Posterior cingulate gyrus (tissue), 11 donors: ENCODE measurements at regions of chr1 and their contacts with region 1.

Region 1: GRCh38 chr1:107782217-107782845 is 182.6 kb downstream of the VAV3 start:
- DNase-seq: no peak

Region 2: DNA sequence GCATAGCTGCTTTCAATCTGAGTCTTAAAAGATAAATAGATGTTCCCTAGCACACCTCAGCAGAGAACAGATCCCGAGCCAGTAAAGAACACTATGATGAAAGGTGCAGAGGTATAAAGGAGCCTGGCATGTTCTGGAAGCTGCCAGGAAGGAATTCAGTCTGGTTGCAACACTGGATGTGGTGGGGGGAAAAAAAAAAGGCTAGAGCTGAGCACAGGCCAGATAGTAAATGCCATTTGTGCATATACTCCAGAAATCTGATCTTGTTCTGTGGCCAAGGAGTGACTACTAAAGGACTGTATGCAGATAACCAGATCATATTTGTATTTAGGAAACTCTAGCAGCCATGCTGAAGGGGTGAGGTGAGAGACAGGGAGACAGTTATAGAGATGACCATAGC is 57.7 kb before region 1 on chr1:
- intact Hi-C with region 1: no loop called
- DNase-seq: no peak

Region 3: DNA sequence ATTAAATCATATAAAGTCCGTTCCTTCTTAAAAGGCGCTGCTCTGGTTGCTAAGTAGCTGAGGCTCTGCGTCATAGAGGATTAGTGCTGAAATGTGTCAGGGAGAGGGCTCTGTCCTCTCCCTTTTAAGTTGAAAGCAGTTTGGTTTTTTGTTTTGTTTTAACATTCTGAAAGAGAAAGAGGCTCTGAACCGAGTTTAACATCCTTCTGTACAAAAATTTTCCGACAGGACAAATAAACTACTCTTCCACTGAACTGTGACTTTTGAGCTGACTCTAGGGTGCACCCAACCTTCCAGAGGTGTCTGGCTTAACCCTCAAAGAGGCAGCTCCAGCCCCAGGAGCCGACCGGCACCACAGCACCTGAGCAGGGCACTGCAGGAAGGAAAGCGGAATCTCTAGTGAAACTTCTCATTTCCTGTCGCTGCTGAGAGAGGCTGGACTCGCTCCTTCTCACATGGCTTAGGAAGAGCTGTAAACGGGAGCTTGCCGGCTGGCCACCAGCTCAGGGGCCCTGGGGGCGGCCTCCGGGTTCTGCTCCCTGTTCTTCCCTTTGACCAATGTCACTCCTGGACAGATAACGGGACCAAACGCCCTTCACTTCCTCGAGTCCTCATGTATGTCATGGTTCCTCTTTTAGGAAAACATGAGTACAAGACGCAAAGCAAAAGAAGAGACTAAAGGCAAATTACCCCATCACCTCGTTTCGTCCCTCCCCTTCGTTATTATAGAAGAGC is 181.4 kb after region 1 on chr1:
- intact Hi-C with region 1: loop called (anchors 10 kb)
- DNase-seq: peak in 4 of 10 donors; percentile 2 to 80 (median 46)

Region 4: DNA sequence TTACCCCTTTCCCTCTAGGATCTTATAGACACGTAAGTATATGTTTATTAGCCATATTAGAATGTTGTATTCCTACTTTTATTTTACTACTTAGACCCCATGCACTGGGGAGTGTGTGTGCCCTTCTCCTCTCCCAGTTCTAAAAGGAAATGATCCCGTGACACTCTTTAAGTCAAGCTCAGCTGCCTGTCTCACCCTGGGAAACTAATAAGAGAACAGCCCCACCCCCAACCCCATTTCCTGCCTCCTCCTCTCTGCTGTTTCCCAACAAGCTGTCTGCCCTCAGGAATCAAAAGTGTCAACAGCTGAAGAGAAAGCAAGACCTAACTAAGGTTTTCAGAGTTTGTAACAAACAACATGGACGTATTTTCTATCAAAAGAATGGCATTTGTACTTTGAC is 275.2 kb after region 1 on chr1:
- intact Hi-C with region 1: loop called (anchors 10 kb)
- DNase-seq: no peak

Region 5: DNA sequence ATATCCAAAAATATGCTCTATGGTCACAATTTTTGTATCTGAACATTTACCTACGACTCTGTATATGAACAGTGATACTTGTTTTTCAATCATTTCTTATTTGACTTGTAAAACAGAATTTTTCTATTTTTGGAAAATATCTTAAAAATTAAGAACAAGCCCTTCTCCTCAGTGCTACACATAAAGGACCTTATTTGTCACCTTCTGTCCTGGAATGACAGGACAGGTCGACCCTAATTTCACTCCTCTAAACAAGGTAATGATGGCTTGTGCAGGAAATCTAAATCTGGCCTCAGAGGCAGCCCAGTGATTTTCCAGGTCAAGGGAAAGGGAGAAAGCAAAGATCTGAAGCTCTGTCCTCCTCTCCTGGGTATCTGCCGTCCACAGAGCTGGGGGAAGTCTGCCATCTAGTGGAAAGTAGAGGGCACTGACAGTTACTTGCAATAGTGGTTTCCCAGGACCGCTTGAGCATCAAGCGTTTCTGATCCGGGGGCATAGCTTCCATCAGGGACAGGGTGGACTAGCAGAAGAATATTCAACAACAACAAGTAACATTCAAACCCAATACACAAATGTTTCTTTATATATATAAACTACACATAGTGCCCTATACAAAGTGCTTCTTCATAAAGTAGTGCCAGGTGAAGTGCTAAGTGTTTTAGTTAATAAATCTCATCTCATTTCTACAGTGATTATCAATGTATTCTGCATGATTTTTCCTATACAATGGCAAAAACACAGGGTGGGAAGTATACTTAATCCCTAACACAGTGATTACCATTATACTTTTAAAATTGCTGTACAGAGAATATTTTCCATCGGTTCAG is 343.2 kb after region 1 on chr1:
- intact Hi-C with region 1: loop called (anchors 1 kb)
- DNase-seq: peak; percentile 32 to 93 (median 64)